Gastrocnemius medialis (tissue), 4 donors: ENCODE measurements at regions of chr13 and their contacts with region 1.

Region 1: GRCh38 chr13:21638319-21639282 is 32.3 kb upstream of the FGF9 start:
- DNase-seq: no peak
- ATAC-seq: no peak
- H3K4me3 ChIP-seq: no peak overlapping the region
- H3K27ac ChIP-seq: no peak overlapping the region
- H3K4me1 ChIP-seq: no peaks in the 10 kb centered on the region
- H3K27me3 ChIP-seq: no peaks in the 10 kb centered on the region
- CTCF ChIP-seq: peak; percentile 47 to 78 (median 63)
- POLR2A ChIP-seq: no peak

Region 2: GRCh38 chr13:21124852-21125251 is 513.7 kb before region 1 on chr13:
- in situ Hi-C with region 1: no loop called
- intact Hi-C with region 1: no loop called
- DNase-seq: no peak
- ATAC-seq: no peak
- H3K4me3 ChIP-seq: no peak overlapping the region
- H3K27ac ChIP-seq: no peak overlapping the region
- H3K4me1 ChIP-seq: no peaks in the 10 kb centered on the region
- H3K27me3 ChIP-seq: no peaks in the 10 kb centered on the region
- CTCF ChIP-seq: no peak
- POLR2A ChIP-seq: no peak

Region 3: DNA sequence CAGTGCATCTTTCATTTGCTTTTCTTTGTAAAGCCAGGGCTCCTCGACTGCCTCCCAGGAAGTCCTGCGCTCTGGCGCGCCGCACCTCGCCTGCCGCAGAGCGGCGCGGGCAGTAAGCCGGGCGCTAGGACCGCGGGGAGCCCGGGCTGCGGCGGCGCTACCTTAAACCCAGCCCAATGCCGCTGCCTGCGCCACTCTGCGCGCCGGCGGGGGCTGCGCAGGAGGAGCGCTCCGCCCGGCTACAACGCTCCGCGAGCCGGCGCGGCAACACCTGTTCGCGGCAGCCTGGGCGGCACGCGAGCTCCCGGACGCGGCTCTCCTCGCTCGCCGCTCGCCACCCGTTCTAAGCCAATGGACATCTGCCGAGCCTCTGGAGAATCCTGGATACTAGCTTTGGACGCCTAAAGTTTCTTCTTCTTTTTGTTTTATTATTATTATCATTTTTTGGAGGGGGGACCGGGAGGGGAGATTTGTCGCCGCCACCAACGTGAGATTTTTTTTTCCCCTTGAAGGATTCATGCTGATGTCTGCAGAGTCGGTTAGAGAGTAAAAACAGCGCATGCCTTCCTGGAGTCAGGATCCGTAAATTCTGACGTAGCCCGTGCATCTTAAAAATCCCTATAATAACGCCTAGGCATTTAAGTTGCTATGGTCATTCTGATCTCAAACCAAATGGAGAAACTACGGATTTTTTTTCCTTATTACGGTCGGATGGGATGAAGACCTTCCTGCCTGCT is 32.5 kb after region 1 on chr13 and contains the start of gene FGF9:
- in situ Hi-C with region 1: no loop called
- intact Hi-C with region 1: loop called (anchors 2 kb)
- DNase-seq: peak; percentile 34 to 59
- ATAC-seq: peak; percentile 63 to 68
- H3K4me3 ChIP-seq: peak within 1 kb of the TSS; percentile 58 to 64 (median 62)
- H3K27ac ChIP-seq: peak within 1 kb of the TSS; percentile 3 to 76 (median 57)
- H3K4me1 ChIP-seq: peaks cover 24 to 36% of the 10 kb centered on the region in 2 donors
- H3K27me3 ChIP-seq: peaks cover 11 to 35% (median 29%) of the 10 kb centered on the region in 3 donors
- CTCF ChIP-seq: peak in 1 of 5 experiments; percentile 20
- POLR2A ChIP-seq: peak; percentile 79 to 90
- total RNA-seq, gene FGF9: 0.16 to 0.38 (median 0.25) TPM in 3 of 4 donors, not detected in the other

Region 4: DNA sequence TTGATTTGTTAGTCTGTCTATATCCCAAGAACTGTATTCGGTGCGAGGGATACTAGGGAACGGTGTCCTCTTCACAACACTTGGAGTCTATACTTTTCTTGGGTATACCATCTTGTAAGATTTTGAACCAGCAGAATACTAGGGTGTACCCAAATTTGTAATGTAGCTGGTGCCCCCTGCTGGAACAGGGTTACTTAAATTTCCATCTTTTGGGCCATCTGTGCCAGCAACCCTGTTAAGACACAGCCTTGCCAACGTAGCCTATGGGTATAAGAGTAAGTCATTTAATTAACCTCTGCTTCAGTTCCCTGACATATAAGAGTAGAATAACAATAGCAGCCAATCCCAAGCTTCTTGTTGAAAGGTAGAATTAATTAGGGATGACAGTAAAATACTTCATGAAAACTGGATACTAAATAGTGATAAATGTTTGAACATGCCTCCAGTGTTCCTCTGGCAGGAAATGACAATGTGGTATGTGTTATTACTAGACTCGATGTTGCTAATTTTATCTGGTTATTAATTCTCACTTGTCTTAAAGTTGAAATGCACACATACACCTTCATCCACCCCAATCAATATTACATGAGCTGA is 639.8 kb after region 1 on chr13:
- in situ Hi-C with region 1: loop called in 1 of 4 experiments (anchors 25 kb)
- intact Hi-C with region 1: loop called (anchors 2 kb)
- DNase-seq: peak in 1 of 2 donors; percentile 18
- ATAC-seq: no peak
- H3K4me3 ChIP-seq: no peak overlapping the region
- H3K27ac ChIP-seq: no peak overlapping the region
- H3K4me1 ChIP-seq: no peaks in the 10 kb centered on the region
- H3K27me3 ChIP-seq: no peaks in the 10 kb centered on the region
- CTCF ChIP-seq: peak in 4 of 5 experiments; percentile 12 to 38 (median 26)
- POLR2A ChIP-seq: no peak

Region 5: GRCh38 chr13:22757530-22758120 is 1119.0 kb after region 1 on chr13:
- in situ Hi-C with region 1: loop called in 2 of 4 experiments (anchors 25 kb)
- intact Hi-C with region 1: no loop called
- DNase-seq: no peak
- ATAC-seq: no peak
- H3K4me3 ChIP-seq: no peak overlapping the region
- H3K27ac ChIP-seq: no peak overlapping the region
- H3K4me1 ChIP-seq: no peaks in the 10 kb centered on the region
- H3K27me3 ChIP-seq: no peaks in the 10 kb centered on the region
- CTCF ChIP-seq: no peak
- POLR2A ChIP-seq: no peak

Region 6: DNA sequence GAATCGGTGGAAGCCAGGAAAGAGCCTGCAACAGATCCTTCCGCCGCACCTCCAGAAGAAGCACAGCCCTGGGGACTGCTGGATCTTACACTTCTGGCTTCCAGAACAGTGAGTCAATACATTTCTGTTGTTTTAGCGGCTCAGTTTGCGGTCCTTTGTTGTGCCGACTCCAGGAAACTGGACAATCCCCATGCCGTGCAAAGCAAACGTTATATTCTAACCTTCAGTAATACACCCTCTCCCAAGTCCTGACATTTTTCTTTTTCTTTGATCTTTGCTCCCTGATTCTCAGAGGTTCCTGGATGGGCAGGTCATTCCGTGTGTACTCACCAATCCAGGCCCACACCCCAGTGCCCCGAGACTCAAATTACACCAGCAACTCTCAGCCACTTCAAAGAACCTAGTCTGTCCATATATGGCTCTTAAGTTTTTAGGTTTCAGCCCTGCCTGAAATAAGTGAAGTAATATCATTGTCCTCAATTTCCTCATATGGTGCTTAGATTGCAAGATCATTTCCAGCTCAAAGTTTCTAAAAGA is 1155.1 kb after region 1 on chr13:
- in situ Hi-C with region 1: loop called in 1 of 4 experiments (anchors 25 kb)
- intact Hi-C with region 1: no loop called
- DNase-seq: no peak
- ATAC-seq: no peak
- H3K4me3 ChIP-seq: no peak overlapping the region
- H3K27ac ChIP-seq: no peak overlapping the region
- H3K4me1 ChIP-seq: no peaks in the 10 kb centered on the region
- H3K27me3 ChIP-seq: peaks cover 0 to 4% (median 4%) of the 10 kb centered on the region in 3 donors
- CTCF ChIP-seq: no peak
- POLR2A ChIP-seq: no peak